ENCODE measurements at regions of chr6 and their contacts with region 1.

Region 1: DNA sequence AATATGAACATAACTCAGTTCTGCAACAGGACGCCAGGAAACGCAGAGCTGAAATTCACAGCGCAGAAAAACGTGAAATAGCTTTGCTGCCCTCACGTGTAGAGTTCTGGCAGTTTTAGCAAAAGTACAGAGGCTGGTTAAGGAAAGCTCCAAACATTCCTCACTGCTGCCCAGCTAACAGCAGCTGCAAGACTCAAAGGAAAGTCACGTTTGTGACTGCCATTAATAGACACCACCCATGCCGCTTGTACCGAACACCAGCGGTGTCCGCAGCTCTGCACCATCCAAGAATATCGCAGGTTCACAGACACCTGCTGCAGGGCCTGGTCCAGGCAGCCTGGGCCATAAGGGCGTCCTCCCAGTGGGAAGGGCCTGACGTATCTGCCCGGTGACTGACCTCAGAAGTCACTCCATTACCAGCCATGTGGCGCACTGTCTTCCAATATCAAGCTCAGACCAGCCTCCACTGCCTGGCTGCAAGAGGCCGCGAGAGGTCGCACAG is 61.4 kb downstream of the WDR27 start:
- DNase-seq: peak; percentile 69
- H3K4me3 ChIP-seq: no peak overlapping the region
- H3K27ac ChIP-seq: no peak overlapping the region
- H3K4me1 ChIP-seq: no peaks in the 10 kb centered on the region
- H3K27me3 ChIP-seq: no peaks in the 10 kb centered on the region

Region 2: GRCh38 chr6:168908887-168909286 is 731.5 kb before region 1 on chr6:
- in situ Hi-C with region 1: loop called (anchors 25 kb)
- DNase-seq: peak; percentile 94
- H3K4me3 ChIP-seq: no peak overlapping the region
- H3K27ac ChIP-seq: peak overlapping the region; percentile 96
- H3K4me1 ChIP-seq: peaks cover 17% of the 10 kb centered on the region
- H3K27me3 ChIP-seq: no peaks in the 10 kb centered on the region

Measured in GM23248 (cell line).